Head of caudate nucleus (tissue), 42 donors: ENCODE measurements at regions of chr16 and their contacts with region 1.

Region 1: DNA sequence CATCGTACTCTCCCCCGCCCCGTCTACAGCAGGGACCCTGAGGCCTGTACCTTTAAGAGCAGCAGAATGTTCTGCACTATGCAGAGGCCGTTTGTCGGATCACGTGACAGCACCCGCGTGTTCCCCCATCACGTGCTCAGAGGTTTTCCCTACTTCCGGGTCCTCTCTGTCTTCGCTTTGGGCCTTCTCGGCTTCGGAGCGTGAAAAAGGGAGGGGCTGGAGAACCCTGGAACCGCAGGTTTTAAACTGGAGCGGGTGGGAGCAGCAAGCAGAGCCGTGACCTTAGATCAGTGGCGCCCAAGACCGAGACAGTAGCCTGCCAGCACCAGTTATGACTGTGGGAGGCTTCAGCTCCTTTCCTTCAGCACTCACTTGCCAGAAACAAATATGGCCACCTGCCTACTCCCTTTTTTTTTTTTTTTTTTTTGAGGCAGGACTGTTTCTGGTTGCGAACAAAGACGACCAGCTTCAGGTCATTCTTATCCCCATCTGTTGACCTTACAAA is at the start of gene CLN3:
- DNase-seq: peak; percentile 90 to 98 (median 96)

Region 2: GRCh38 chr16:28553776-28554633 is 62.0 kb after region 1 on chr16 and contains the start of gene SGF29:
- intact Hi-C with region 1: loop called (anchors 2 kb)
- DNase-seq: peak; percentile 86 to 97 (median 92)